Activated B cell treated with CpG ODN at 0.5 μM for 24 hours (primary cell): ENCODE measurements at regions of chr11 and their contacts with region 1.

Region 1: GRCh38 chr11:66328307-66329144 is 7.7 kb downstream of the RIN1 start:
- DNase-seq: peak; percentile 79
- ATAC-seq: peak; percentile 99
- H3K4me3 Mint-ChIP-seq: peak overlapping the region; percentile 46
- H3K27ac Mint-ChIP-seq: no peak overlapping the region
- H3K4me1 Mint-ChIP-seq: peaks cover 22% of the 10 kb centered on the region
- H3K27me3 Mint-ChIP-seq: no peaks in the 10 kb centered on the region
- CTCF ChIP-seq: peak; percentile 63

Region 2: DNA sequence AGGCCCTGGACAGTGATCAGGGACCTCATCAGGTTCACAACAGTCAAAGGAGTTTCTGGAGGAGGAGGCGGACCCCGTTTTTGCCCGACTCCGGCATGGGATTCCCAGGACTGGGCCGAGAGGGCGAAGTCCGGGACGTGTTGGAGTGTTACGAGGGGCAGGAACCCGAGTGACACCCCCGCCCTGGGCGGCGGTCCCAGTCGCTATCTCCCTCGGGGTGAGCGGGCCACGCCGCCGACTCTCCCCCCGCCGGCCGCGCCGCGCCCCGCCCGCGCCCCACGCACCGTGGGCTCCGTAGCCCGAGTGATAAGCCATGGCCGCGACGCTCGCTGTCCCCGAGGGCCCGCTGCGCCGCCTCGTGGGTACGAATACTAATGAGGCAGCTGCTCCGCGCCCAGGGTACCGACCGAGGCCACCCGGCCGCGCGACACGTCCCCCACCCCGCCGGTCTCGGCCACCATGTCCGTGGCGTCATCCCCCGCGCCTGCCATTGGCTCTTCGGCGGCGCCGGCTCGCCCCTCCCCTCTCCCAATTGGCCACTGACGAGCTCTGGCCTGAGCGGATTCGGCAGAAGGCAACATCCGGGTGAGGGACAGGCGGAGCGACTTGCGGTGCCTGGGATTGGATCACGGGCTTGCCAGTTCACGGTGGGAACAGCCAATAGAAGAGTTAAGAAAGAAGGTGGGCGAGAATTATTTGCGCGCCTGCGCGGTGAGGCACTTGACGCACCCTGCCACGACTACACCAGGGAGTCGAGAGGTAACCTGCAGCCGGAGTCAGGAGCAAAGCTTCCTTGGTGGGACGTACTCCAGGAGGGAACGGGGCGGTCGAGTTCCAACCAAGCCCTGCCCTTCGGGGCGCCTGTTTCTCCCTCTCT is 39.6 kb before region 1 on chr11 and contains the start of gene YIF1A:
- CTCF ChIA-PET with region 1: no interaction called
- POLR2A ChIA-PET with region 1: no interaction called
- intact Hi-C with region 1: loop called (anchors 2 kb)
- DNase-seq: peak; percentile 93
- ATAC-seq: peak; percentile 95
- H3K4me3 Mint-ChIP-seq: peak within 1 kb of the TSS; percentile 89
- H3K27ac Mint-ChIP-seq: peak within 1 kb of the TSS; percentile 90
- H3K4me1 Mint-ChIP-seq: peaks cover 31% of the 10 kb centered on the region
- H3K27me3 Mint-ChIP-seq: peaks cover 17% of the 10 kb centered on the region
- CTCF ChIP-seq: no peak
- total RNA-seq, gene YIF1A: 53.4 and 62.6 TPM in 2 replicates